Mammary epithelial cell (primary cell): ENCODE measurements at regions of chr9 and their contacts with region 1.

Region 1: GRCh38 chr9:69155341-69156030 is 18.6 kb upstream of the TJP2 start:
- DNase-seq: peak; percentile 90
- H3K4me3 ChIP-seq: no peak overlapping the region
- H3K27ac ChIP-seq: peak overlapping the region; percentile 53
- H3K4me1 ChIP-seq: peaks cover 11% of the 10 kb centered on the region
- H3K27me3 ChIP-seq: no peaks in the 10 kb centered on the region
- CTCF ChIP-seq: no peak

Region 2: DNA sequence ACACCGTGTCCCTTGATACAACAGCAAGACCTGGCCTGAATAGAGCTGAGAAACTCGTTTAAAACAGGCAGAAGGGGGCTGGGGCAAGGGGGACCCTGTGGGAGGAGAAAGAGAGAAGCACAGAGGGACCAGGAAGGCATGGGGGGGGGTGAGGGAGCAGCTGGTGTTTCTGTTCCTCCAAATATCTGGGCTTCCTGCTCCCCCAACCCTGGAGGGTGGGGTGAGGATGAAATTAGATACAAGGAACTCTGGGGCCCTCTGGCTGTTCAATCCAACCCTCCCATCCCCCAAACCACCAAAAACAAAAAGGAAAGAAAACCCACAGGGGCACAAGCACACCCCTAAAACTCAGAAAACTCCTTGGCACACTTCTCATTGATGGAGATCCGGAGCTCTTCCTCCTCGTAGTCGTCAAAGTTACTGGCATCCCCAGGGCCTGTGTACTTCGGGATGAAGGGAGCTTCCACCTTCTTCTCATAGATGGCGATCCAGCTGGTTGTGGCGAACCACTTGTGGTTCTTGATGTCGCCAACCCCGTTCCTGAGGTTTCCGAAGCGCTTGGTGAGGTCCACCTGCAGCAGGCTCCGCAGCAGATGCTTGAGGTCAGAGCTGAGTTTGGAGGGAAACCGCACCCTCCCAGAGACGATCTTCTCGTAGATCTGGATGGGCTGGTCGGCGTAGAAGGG is 142.6 kb before region 1 on chr9:
- CTCF ChIA-PET with region 1: interaction called, 10 read pairs
- dilution Hi-C with region 1: no loop called
- in situ Hi-C with region 1: no loop called
- intact Hi-C with region 1: no loop called
- DNase-seq: no peak
- H3K4me3 ChIP-seq: no peak overlapping the region
- H3K27ac ChIP-seq: no peak overlapping the region
- H3K4me1 ChIP-seq: no peaks in the 10 kb centered on the region
- H3K27me3 ChIP-seq: peaks cover 2% of the 10 kb centered on the region
- CTCF ChIP-seq: no peak

Region 3: DNA sequence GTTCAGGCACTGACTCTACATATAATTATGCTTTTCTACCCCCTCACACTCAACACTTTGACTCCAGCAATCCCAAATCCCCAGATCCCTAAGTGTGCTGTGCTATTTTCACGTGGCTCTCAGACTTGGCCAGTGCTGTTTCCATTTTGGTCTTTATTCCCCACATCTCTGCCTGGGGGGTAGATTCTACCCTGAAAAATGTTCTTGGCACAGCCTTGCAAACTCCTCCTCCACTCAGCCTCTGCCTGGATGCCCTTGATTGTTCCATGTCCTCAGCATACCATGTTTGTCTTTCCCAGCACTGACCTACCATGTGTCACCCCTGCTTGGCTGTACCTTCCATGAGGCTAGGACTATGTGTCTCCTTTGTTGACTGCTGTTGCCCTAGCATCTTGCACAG is 76.9 kb before region 1 on chr9:
- CTCF ChIA-PET with region 1: no interaction called
- dilution Hi-C with region 1: no loop called
- in situ Hi-C with region 1: no loop called
- intact Hi-C with region 1: no loop called
- DNase-seq: no peak
- H3K4me3 ChIP-seq: no peak overlapping the region
- H3K27ac ChIP-seq: no peak overlapping the region
- H3K4me1 ChIP-seq: no peaks in the 10 kb centered on the region
- H3K27me3 ChIP-seq: no peaks in the 10 kb centered on the region
- CTCF ChIP-seq: no peak

Region 4: GRCh38 chr9:69180670-69181069 is 25.2 kb after region 1 on chr9:
- CTCF ChIA-PET with region 1: interaction called, 15 read pairs
- dilution Hi-C with region 1: no loop called
- in situ Hi-C with region 1: no loop called
- intact Hi-C with region 1: no loop called
- DNase-seq: peak; percentile 98
- H3K4me3 ChIP-seq: peak overlapping the region in 1 of 3 experiments; percentile 13
- H3K27ac ChIP-seq: peak overlapping the region; percentile 99
- H3K4me1 ChIP-seq: peaks cover 59% of the 10 kb centered on the region
- H3K27me3 ChIP-seq: no peaks in the 10 kb centered on the region
- CTCF ChIP-seq: no peak

Region 5: DNA sequence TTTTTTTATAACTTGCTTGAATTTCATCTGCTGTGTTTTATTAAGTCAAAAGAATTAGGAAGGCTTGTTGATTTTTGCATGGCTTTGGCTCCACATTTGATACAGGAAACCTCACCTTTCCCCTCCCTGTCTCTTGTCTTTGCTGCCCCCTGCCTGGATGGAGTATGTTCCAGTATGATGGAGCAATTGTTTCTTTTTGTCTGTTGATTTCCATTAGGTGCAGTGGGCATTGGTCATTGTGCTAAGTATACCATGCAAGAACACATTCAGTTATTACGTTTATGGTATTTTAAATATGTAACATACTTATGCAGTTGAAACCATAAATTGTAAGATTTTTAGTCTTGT is 38.2 kb after region 1 on chr9:
- CTCF ChIA-PET with region 1: interaction called, 42 read pairs
- dilution Hi-C with region 1: loop called (anchors 5 kb)
- in situ Hi-C with region 1: no loop called
- intact Hi-C with region 1: loop called (anchors 1 kb)
- DNase-seq: no peak
- H3K4me3 ChIP-seq: no peak overlapping the region
- H3K27ac ChIP-seq: no peak overlapping the region
- H3K4me1 ChIP-seq: no peaks in the 10 kb centered on the region
- H3K27me3 ChIP-seq: no peaks in the 10 kb centered on the region
- CTCF ChIP-seq: peak in 1 of 2 donors; percentile 25

Region 6: GRCh38 chr9:69207503-69207902 is 52.0 kb after region 1 on chr9:
- CTCF ChIA-PET with region 1: interaction called, 20 read pairs
- dilution Hi-C with region 1: no loop called
- in situ Hi-C with region 1: no loop called
- intact Hi-C with region 1: no loop called
- DNase-seq: no peak
- H3K4me3 ChIP-seq: no peak overlapping the region
- H3K27ac ChIP-seq: no peak overlapping the region
- H3K4me1 ChIP-seq: peaks cover 6% of the 10 kb centered on the region
- H3K27me3 ChIP-seq: no peaks in the 10 kb centered on the region
- CTCF ChIP-seq: no peak